ENCODE measurements at regions of chr1 and their contacts with region 1.

Region 1: GRCh38 chr1:86247597-86248279 is 91.2 kb upstream of the COL24A1 start:
- DNase-seq: no peak
- H3K4me3 Mint-ChIP-seq: no peak overlapping the region
- H3K27ac Mint-ChIP-seq: no peak overlapping the region
- H3K4me1 Mint-ChIP-seq: no peaks in the 10 kb centered on the region
- H3K27me3 Mint-ChIP-seq: peaks cover 11% of the 10 kb centered on the region
- CTCF ChIP-seq: no peak

Region 2: DNA sequence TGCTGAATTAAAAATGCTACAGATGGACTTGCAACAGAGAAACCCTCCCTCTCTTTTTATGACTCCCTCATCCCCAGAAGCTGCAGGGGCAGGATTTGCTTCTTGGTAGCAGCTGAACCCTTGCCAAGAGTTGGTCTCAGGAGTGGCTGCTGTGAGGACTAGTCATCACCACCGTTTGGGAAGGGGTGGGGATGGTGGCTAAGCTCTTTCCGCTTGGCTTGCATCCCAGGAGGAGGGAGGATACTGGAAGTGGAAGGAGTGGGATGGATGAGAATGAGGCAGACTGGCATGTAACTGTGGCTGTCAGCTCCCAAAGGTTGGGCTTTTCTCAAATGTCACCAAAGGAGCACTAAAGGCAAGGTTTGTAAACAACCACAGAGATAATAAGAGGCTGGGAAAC is 40.4 kb before region 1 on chr1:
- CTCF ChIA-PET with region 1: no interaction called
- POLR2A ChIA-PET with region 1: no interaction called
- intact Hi-C with region 1: loop called (anchors 2 kb)
- DNase-seq: peak; percentile 95
- H3K4me3 Mint-ChIP-seq: no peak overlapping the region
- H3K27ac Mint-ChIP-seq: no peak overlapping the region
- H3K4me1 Mint-ChIP-seq: peaks cover 7% of the 10 kb centered on the region
- H3K27me3 Mint-ChIP-seq: no peaks in the 10 kb centered on the region
- CTCF ChIP-seq: no peak

Measured in MCF 10A (cell line).